A673 (cell line): ENCODE measurements at regions of chr16 and their contacts with region 1.

Region 1: GRCh38 chr16:85027958-85028684 is 526 bp downstream of the KIAA0513 start:
- DNase-seq: no peak
- H3K4me3 ChIP-seq: peak overlapping the region; percentile 97
- H3K27ac ChIP-seq: peak overlapping the region; percentile 54
- H3K4me1 ChIP-seq: peaks cover 23% of the 10 kb centered on the region
- H3K27me3 ChIP-seq: peaks cover 4% of the 10 kb centered on the region
- CTCF ChIP-seq: no peak; the same call in 1 of the 2 replicates

Region 2: DNA sequence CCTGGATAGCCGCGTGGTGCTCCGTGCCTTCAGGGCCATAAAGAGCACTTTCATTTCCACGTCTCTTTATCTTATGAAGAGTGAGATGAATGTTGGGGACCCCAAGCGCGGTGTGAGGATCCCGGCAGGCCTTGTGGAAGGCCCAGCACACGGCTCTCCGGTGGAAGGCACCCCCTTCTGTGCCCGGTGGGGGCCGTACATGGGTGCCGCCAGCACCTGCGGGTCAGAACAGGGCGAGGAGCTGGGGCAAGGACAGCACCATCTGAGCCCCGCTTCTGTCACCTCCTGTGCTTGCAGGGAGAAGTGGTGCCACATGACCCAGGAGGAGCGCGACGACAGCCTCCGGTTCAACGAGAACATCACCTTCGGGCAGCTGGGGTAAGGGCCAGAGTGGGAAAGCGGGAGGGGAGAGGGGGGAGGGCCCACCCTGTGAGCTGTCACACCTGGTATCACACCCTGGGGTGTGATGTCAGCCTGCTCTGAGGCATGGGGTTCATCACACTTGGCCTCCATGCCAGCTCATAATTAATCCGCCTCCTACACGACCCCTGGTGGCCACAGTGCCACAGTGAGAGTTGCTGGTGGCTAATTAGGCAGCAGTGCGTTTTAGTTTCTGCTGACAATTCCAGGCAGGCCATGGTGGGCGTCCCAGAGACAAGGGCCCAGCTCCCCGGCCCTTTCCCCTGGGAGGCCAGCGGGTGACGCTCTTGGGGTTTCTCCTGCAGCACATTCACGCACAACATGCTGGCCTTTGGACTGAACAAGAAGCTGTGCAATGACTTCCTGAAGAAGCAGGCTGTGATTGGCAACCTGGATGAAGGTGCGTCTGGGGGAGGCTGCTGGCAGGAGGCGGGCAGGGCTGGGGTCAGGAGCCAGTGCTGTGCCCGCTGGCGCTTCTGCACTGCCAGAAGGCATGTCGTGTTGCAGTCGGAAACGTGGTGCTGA is 58.5 kb after region 1 on chr16:
- CTCF ChIA-PET with region 1: interaction called, 3 read pairs
- POLR2A ChIA-PET with region 1: no interaction called
- intact Hi-C with region 1: loop called (anchors 2 kb)
- DNase-seq: peak; percentile 76
- H3K4me3 ChIP-seq: no peak overlapping the region
- H3K27ac ChIP-seq: no peak overlapping the region
- H3K4me1 ChIP-seq: no peaks in the 10 kb centered on the region
- H3K27me3 ChIP-seq: no peaks in the 10 kb centered on the region
- CTCF ChIP-seq: peak; percentile 75